Left cardiac atrium (tissue), 4 donors: ENCODE measurements at regions of chr17 and their contacts with region 1.

Region 1: DNA sequence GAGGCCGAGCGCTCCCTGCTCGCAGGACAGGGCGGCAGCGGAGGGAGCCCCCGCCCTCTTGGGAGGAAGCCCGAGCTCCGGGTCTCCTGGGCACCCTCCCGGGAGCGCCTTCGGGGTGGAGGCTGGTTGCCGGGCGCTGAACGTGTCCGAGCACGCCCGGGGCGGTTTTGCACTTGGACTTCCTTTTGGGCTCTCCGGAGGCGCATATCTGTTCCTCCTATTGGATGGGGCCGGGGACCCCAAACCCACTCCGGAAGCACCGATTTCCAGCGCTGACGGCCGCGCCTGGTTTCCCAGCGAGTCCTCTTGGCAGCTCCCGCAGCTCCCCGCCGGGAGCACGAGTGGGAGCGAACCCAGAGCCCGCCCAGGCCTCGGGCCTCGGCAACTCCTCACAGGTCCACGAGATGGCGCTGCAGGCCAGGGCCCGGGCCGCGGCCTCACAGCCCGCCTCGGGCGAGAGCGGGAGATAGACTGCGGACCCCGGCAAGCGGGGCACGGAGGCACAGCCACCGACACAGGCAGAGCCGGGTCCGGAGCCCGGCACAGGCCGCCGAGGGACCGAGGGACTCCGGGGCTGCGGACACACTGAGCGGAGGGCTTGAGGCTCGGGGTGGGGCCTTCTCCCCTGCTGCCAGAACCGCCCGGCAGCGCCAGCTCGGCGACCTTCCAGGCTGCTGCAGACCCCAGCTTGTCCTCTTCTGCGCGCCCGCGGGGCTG is 12.7 kb downstream of the TBX2 start:
- DNase-seq: peak; percentile 86
- ATAC-seq: peak; percentile 77 to 83

Region 2: GRCh38 chr17:61002316-61002736 is 410.0 kb before region 1 on chr17:
- intact Hi-C with region 1: loop called in 1 of 2 experiments (anchors 10 kb)
- DNase-seq: no peak
- ATAC-seq: peak in 1 of 2 donors; percentile 53

Region 3: DNA sequence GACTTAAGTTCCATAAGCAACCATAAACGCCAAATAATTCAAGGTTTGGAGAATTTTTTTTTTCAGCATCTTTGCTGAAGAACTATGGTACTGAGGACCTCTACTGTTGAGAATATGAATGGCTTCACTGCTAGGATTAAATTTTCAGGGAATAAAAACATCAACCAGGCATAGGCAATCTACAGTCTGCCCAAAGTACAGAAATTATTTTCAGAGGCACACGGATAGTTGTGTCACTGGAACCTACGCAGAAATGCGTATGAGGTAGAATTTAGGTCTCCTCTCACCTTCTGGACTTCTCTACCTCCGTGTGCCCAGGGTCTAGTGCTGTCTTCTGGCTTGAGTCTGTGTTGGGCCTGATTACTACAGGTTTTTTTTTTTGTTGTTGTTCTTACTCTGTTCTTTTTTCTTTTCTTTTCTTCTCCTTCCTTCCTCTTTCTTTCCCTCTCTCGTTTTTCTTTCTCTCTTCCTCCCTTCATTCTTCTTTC is 139.0 kb after region 1 on chr17:
- intact Hi-C with region 1: loop called (anchors 5 to 10 kb)
- DNase-seq: no peak
- ATAC-seq: peak in 1 of 2 donors; percentile 41

Region 4: DNA sequence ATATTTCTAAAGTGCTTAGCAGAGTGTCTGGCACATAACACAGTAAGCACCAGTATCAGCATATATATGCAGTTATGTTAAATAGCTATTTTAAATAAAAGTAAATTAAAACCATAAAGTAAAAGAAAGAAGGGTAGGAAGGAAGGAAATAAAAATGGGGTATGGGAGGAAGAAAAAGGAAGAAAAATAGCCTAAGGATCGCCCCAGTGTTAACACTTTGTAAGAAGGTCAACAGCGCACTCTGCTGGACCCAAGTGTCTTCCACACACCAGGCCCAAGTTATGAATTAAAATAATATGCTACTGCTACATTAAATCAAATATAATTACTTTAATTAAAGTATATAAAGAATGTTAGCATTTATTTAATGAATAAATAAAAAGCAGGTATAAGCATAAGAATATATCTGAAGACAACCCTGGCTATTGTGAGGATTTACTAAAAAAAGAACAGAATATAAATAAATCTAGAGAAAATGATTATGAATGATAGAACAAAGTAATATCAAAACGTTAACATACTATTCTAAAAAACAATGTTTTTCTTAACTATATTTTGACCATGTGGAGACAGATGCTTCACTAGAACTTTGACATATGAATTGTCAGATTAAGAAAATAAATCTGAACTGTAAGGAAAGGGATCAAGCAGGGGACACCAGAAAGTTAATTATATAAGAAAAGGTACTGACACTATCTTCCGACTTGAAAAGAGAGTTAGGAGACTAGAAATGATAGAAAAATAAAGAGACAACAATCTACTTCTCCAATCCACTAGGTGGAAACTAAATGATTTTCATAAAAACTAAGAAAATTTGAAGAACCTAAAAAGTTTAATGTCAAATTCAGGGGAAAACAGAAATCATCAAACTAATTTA is 425.1 kb after region 1 on chr17:
- intact Hi-C with region 1: loop called in 1 of 2 experiments (anchors 10 kb)
- DNase-seq: peak; percentile 45
- ATAC-seq: peak in 1 of 2 donors; percentile 44

Region 5: GRCh38 chr17:62065598-62066468 is 653.5 kb after region 1 on chr17:
- intact Hi-C with region 1: loop called in 1 of 2 experiments (anchors 5 kb)
- DNase-seq: peak; percentile 99
- ATAC-seq: peak; percentile 99 to 100